Activated CD4-positive, alpha-beta memory T cell treated with anti-CD3 and anti-CD28 coated beads for 36 hours (primary cell): ENCODE measurements at regions of chr11 and their contacts with region 1.

Region 1: DNA sequence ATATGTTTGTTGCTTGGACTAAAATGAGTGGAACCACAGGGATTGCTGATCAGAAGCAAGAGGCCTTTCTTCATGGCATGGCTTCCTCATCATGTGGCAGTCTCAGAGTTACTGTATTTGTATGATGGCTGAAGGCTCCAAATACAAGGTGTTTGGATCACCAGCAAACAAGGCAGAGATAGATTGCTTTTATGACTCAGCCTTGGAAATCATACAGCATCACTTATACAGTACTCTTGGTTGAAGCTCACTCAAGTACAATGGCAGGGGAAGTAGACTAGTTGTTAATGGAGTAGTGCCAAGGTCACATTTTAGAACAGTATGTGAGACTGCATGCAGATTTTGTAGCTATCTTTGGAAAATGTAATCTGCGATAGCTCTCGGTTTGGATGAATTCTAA is 16.6 kb downstream of the CAPRIN1 start:
- DNase-seq: no peak
- H3K4me3 Mint-ChIP-seq: no peak overlapping the region
- H3K27ac Mint-ChIP-seq: no peak overlapping the region
- H3K4me1 Mint-ChIP-seq: peaks cover 54% of the 10 kb centered on the region
- H3K27me3 Mint-ChIP-seq: no peaks in the 10 kb centered on the region

Region 2: DNA sequence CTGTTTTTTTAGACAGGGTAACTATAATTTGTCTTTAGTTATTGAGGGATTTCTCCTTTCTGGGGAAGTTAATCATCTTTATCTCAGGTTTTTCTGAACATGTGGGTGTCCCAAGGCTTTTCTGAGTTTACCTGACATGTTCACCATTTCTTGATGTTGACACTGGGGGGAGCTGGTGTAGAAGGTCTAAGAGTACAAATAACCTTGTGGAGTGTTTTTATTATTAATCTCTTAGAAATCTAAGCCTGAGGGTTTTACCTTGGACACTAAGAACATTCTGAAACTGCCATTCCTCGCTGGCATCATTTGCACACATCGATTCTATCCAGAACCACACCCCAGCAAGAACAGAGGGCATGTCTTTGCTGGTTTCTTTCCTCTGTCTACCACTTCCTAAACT is 351.9 kb before region 1 on chr11:
- CTCF ChIA-PET with region 1: no interaction called
- POLR2A ChIA-PET with region 1: no interaction called
- intact Hi-C with region 1: no loop called
- DNase-seq: no peak
- H3K4me3 Mint-ChIP-seq: no peak overlapping the region
- H3K27ac Mint-ChIP-seq: no peak overlapping the region
- H3K4me1 Mint-ChIP-seq: peaks cover 2% of the 10 kb centered on the region
- H3K27me3 Mint-ChIP-seq: no peaks in the 10 kb centered on the region

Region 3: GRCh38 chr11:33790040-33790439 is 278.1 kb before region 1 on chr11:
- CTCF ChIA-PET with region 1: no interaction called
- POLR2A ChIA-PET with region 1: no interaction called
- intact Hi-C with region 1: no loop called
- DNase-seq: no peak
- H3K4me3 Mint-ChIP-seq: no peak overlapping the region
- H3K27ac Mint-ChIP-seq: no peak overlapping the region
- H3K4me1 Mint-ChIP-seq: peaks cover 3% of the 10 kb centered on the region
- H3K27me3 Mint-ChIP-seq: peaks cover 36% of the 10 kb centered on the region

Region 4: DNA sequence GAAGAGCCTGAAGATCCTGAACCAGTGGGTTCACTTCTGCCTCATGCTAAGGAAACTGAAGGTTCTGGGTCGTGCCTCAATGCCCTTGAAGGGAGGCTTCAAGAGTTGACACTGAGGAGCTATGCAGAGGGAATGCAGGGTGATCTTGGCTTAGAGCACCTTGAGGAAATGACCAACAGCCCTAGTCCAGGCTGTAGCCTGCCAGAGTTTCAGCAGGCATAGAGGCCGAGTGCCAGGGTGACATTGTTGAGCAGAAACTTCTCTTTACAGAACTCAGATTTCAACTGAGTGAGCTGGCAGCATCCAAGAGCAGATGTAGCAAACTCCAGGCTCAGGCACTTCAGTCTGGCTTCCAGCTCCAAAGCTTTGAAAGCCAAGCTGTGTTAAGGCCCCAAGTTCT is 39.7 kb before region 1 on chr11:
- CTCF ChIA-PET with region 1: no interaction called
- POLR2A ChIA-PET with region 1: no interaction called
- intact Hi-C with region 1: no loop called
- DNase-seq: no peak
- H3K4me3 Mint-ChIP-seq: no peak overlapping the region
- H3K27ac Mint-ChIP-seq: no peak overlapping the region
- H3K4me1 Mint-ChIP-seq: no peaks in the 10 kb centered on the region
- H3K27me3 Mint-ChIP-seq: peaks cover 1% of the 10 kb centered on the region

Region 5: DNA sequence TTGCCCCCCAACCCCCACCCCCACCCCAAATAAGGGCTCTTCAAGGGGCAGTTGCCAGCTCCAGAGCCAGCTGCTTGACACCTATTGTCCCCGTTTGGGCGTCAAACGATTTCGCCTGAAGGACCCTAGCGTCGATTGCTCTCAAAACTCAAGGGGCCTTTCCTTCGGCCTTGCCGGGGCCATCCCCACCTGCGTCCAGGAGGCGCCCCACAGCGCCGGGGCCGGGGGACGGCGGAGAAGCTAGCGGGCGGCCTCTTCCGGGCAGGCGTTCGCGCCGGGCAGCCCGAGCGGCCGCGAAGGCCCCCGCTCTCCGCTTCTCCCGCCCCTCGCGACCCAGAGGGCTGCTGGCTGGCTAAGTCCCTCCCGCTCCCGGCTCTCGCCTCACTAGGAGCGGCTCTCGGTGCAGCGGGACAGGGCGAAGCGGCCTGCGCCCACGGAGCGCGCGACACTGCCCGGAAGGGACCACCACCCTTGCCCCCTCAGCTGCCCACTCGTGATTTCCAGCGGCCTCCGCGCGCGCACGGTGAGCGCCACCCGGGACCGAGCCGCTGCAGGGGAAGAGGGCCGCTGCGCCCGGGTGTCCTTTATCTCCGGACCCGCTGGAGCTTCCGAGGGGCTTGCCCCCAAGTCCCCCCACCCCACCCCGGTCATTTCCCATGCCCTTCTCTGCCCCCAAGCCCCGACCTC is 16.6 kb before region 1 on chr11 and contains the start of gene CAPRIN1:
- CTCF ChIA-PET with region 1: interaction called, 4 read pairs
- POLR2A ChIA-PET with region 1: interaction called, 5 read pairs
- intact Hi-C with region 1: loop called (anchors 1 kb)
- DNase-seq: peak; percentile 88
- H3K4me3 Mint-ChIP-seq: peak within 1 kb of the TSS; percentile 92
- H3K27ac Mint-ChIP-seq: peak within 1 kb of the TSS; percentile 96
- H3K4me1 Mint-ChIP-seq: peaks cover 18% of the 10 kb centered on the region
- H3K27me3 Mint-ChIP-seq: no peaks in the 10 kb centered on the region
- total RNA-seq, gene CAPRIN1: 261 to 264 TPM

Region 6: GRCh38 chr11:34086554-34087283 is 18.6 kb after region 1 on chr11:
- CTCF ChIA-PET with region 1: interaction called, 3 read pairs
- POLR2A ChIA-PET with region 1: no interaction called
- intact Hi-C with region 1: loop called (anchors 2 kb)
- DNase-seq: no peak
- H3K4me3 Mint-ChIP-seq: no peak overlapping the region
- H3K27ac Mint-ChIP-seq: peak overlapping the region; percentile 55
- H3K4me1 Mint-ChIP-seq: peaks cover 28% of the 10 kb centered on the region
- H3K27me3 Mint-ChIP-seq: no peaks in the 10 kb centered on the region